ENCODE measurements at regions of chr4 and their contacts with region 1.

Region 1: DNA sequence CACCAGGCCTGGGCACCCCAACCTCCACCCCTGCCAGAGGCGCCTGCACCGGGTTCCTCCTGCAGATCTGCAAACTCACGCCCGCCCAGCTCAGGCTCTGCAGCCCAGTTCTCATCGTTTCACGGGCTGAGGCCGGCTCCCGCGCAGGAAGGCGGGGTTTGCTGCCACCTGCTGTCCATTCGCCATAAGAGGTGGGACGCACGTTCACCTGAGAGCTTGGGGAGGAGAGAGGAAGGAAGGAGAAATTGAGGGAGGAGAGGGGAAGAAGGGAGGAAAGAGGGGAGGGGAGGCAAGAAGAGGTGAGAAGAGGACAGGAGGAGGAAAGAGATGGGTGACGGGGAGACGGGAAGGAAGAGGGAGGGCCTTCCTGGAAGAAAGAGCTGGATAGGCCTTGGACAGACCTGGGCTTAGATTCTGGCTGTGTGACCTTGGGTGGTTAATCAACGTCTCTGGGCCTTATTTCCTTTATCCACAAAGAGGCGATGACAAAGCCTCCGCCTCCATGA is 114.5 kb downstream of the ADRA2C start:
- DNase-seq: peak; percentile 93
- ATAC-seq: peak; percentile 93
- H3K4me3 Mint-ChIP-seq: peak overlapping the region; percentile 45
- H3K27ac Mint-ChIP-seq: no peak overlapping the region
- H3K4me1 Mint-ChIP-seq: peaks cover 16% of the 10 kb centered on the region
- H3K27me3 Mint-ChIP-seq: peaks cover 34% of the 10 kb centered on the region
- CTCF ChIP-seq: peak; percentile 57

Region 2: DNA sequence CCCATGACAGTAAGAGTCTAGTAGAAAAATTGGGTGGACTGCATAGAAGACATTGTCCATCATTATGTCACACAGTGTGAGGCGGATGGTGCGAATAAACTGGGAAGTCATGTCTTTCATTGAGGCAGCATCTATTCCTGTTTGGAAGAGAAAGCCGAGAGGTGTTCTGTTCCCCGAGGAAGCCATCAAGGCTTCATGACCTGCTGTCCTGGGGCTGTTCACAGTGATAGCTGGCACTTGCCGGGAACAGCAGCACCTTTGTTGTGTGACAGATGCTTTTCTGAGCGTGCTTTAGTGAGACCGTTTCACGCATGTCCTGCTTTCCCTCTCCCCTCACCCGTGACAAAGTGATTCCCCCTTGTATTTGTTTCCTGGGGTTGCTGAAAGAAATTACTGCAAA is 567.5 kb before region 1 on chr4:
- CTCF ChIA-PET with region 1: no interaction called
- POLR2A ChIA-PET with region 1: no interaction called
- DNase-seq: no peak
- ATAC-seq: no peak
- H3K4me3 Mint-ChIP-seq: no peak overlapping the region
- H3K27ac Mint-ChIP-seq: no peak overlapping the region
- H3K4me1 Mint-ChIP-seq: peaks cover 12% of the 10 kb centered on the region
- H3K27me3 Mint-ChIP-seq: no peaks in the 10 kb centered on the region
- CTCF ChIP-seq: no peak

Region 3: DNA sequence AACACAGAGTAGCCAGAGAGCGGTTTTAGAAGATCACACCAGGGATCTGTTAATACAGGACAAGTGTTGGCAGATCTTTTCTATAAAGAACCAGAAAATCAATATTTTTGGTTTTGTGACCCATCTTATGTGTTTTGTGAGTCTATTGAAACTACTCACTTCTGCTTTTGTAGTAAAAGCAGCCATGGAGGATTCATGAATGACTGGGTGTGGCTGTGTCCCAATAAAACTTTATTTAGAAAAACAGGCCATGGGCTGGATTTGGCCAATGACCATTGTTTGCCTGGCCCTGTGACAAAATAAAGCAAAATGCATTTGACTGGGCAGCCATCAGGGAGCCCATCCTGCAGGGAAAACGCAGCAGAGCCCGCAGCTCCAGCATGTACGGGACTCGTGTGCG is 214.4 kb before region 1 on chr4:
- CTCF ChIA-PET with region 1: no interaction called
- POLR2A ChIA-PET with region 1: no interaction called
- DNase-seq: no peak
- ATAC-seq: no peak
- H3K4me3 Mint-ChIP-seq: no peak overlapping the region
- H3K27ac Mint-ChIP-seq: no peak overlapping the region
- H3K4me1 Mint-ChIP-seq: no peaks in the 10 kb centered on the region
- H3K27me3 Mint-ChIP-seq: peaks cover 6% of the 10 kb centered on the region; the same call in 1 of the 2 replicates
- CTCF ChIP-seq: no peak

Region 4: GRCh38 chr4:3703677-3704521 is 176.8 kb before region 1 on chr4:
- CTCF ChIA-PET with region 1: interaction called, 10 read pairs
- POLR2A ChIA-PET with region 1: no interaction called
- DNase-seq: no peak
- ATAC-seq: peak; percentile 71
- H3K4me3 Mint-ChIP-seq: no peak overlapping the region
- H3K27ac Mint-ChIP-seq: no peak overlapping the region
- H3K4me1 Mint-ChIP-seq: peaks cover 13% of the 10 kb centered on the region
- H3K27me3 Mint-ChIP-seq: no peaks in the 10 kb centered on the region
- CTCF ChIP-seq: no peak

Region 5: GRCh38 chr4:3783406-3784306 is 97.0 kb before region 1 on chr4:
- CTCF ChIA-PET with region 1: interaction called, 44 read pairs
- POLR2A ChIA-PET with region 1: no interaction called
- DNase-seq: peak; percentile 78
- ATAC-seq: peak; percentile 80
- H3K4me3 Mint-ChIP-seq: no peak overlapping the region
- H3K27ac Mint-ChIP-seq: no peak overlapping the region
- H3K4me1 Mint-ChIP-seq: peaks cover 3% of the 10 kb centered on the region
- H3K27me3 Mint-ChIP-seq: no peaks in the 10 kb centered on the region
- CTCF ChIP-seq: peak; percentile 53

Region 6: GRCh38 chr4:3807822-3808496 is 72.7 kb before region 1 on chr4:
- CTCF ChIA-PET with region 1: interaction called, 14 read pairs
- POLR2A ChIA-PET with region 1: no interaction called
- DNase-seq: no peak
- ATAC-seq: peak; percentile 59
- H3K4me3 Mint-ChIP-seq: peak overlapping the region; percentile 3; the same call in 1 of the 2 replicates
- H3K27ac Mint-ChIP-seq: peak overlapping the region; percentile 21; the same call in 1 of the 2 replicates
- H3K4me1 Mint-ChIP-seq: peaks cover 22% of the 10 kb centered on the region
- H3K27me3 Mint-ChIP-seq: peaks cover 5% of the 10 kb centered on the region; the same call in 1 of the 2 replicates
- CTCF ChIP-seq: no peak

Region 7: DNA sequence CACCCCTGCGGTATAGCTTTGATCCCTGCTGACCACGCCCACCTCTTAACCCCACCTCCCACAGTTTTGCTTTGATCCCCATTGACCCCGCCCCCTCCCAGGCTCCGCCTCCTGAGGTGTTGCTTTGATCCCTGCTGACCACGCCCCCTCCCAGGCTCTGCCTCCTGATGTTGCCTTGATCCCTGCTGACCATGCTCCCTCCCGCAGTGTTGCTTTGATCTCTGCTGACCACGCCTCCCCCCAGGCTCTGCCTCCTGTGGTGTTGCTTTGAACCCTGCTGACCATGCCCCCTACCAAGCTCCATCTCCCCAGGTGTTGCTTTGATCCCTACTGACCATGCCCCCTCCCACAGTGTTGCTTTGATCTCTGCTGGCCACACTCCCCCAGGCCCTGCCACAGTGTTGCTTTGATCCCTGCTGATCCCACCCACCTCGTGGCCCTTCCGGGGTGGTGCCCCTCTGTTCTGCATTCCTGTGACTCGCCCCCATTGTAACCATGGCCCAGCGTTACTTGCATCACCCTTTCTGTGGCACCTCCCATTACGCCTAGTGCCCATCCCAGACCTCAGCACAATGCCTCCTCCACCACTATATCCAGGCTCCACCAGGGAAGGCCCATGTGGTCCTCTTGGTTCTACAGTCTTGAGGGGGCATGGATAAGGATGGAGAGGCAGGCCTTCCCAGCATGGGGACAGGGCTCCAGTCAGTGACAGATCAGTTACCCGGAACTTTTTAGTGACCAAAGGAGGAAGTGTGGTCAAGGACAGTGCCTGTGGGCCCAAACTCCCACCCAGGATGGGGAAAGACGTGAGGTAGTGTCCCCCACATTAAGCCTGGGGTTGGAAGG is 43.7 kb before region 1 on chr4:
- CTCF ChIA-PET with region 1: interaction called, 18 read pairs
- POLR2A ChIA-PET with region 1: interaction called, 3 read pairs
- DNase-seq: peak; percentile 77
- ATAC-seq: peak; percentile 36
- H3K4me3 Mint-ChIP-seq: no peak overlapping the region
- H3K27ac Mint-ChIP-seq: no peak overlapping the region
- H3K4me1 Mint-ChIP-seq: peaks cover 39% of the 10 kb centered on the region
- H3K27me3 Mint-ChIP-seq: peaks cover 29% of the 10 kb centered on the region
- CTCF ChIP-seq: no peak

Region 8: GRCh38 chr4:3862640-3863420 is 17.8 kb before region 1 on chr4:
- CTCF ChIA-PET with region 1: interaction called, 24 read pairs
- POLR2A ChIA-PET with region 1: interaction called, 6 read pairs
- DNase-seq: peak; percentile 90
- ATAC-seq: peak; percentile 90
- H3K4me3 Mint-ChIP-seq: no peak overlapping the region; the same call in 1 of the 2 replicates
- H3K27ac Mint-ChIP-seq: peak overlapping the region; percentile 92
- H3K4me1 Mint-ChIP-seq: peaks cover 22% of the 10 kb centered on the region
- H3K27me3 Mint-ChIP-seq: no peaks in the 10 kb centered on the region
- CTCF ChIP-seq: no peak

Region 9: GRCh38 chr4:4327652-4328121 is 447.0 kb after region 1 on chr4:
- CTCF ChIA-PET with region 1: no interaction called
- POLR2A ChIA-PET with region 1: no interaction called
- DNase-seq: peak; percentile 85
- ATAC-seq: peak; percentile 98
- H3K4me3 Mint-ChIP-seq: peak overlapping the region; percentile 9; the same call in 1 of the 2 replicates
- H3K27ac Mint-ChIP-seq: peak overlapping the region; percentile 81
- H3K4me1 Mint-ChIP-seq: peaks cover 12% of the 10 kb centered on the region
- H3K27me3 Mint-ChIP-seq: no peaks in the 10 kb centered on the region; the same call in 1 of the 2 replicates
- CTCF ChIP-seq: no peak